Right ventricle myocardium inferior (tissue), 1 donor: ENCODE measurements at regions of chrX and their contacts with region 1.

Region 1: GRCh38 chrX:73855546-73855945 is 292.5 kb downstream of the CHIC1 start:
- DNase-seq: no peak
- ATAC-seq: no peak

Region 2: GRCh38 chrX:73766431-73766795 is 89.1 kb before region 1 on chrX:
- intact Hi-C with region 1: no loop called
- DNase-seq: no peak
- ATAC-seq: no peak

Region 3: DNA sequence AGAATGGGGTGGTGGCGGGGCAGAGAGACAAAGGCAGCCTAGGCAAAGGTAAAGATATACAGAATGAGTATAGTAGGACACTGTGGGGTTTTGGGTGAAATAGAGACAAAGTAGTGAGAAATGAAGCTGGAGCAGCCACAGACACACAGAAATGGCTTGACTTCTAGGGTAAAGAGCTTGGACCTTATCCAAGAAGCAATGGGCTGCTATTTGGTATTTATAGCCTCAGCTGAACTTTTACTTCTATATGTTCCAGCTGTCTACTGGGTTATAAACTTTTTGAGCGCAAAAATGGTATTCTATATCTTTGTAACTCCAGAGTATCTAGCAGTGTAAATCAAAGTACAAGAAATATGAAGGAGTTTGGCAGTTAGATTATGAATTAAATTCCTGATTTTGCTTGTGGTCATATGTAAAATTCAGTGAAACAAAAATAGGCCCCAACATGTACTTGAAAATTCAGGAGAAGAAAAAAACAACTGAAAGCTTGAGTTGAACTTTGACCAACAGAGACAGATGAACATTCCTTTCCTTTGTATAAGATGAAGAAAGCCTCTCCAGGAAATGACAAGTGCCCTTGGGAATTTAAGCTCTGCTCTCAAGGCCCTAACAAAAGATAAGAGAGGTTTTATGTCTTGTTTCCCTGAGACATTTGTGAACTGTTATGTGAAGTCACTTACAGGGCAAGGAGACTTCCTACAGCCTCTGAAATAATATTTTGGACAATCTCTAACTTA is 61.6 kb after region 1 on chrX:
- intact Hi-C with region 1: no loop called
- DNase-seq: no peak
- ATAC-seq: no peak

Region 4: GRCh38 chrX:74015379-74016019 is 160.0 kb after region 1 on chrX:
- intact Hi-C with region 1: loop called (anchors 2 kb)
- DNase-seq: no peak
- ATAC-seq: peak; percentile 37

Region 5: GRCh38 chrX:74133156-74133796 is 277.7 kb after region 1 on chrX:
- intact Hi-C with region 1: loop called (anchors 5 kb)
- DNase-seq: no peak
- ATAC-seq: peak; percentile 59

Region 6: DNA sequence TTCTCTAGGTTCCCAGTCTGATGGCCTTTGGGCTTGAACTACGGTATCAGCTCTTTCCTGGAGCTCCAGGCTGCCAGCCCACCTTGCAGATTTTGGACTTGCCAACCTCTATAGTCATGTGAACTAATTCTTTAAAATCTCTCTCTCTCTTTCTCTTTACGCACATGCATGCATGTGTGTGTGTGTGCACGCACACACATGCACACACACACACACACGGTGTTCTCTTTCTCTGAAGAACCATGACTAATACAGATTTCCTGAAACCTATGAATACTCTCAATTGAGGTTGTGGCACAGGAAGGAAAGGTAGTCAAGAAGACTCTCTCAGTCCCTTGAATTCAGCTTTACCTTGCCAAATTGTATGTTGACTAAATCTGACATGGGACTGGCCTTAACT is 442.2 kb after region 1 on chrX:
- intact Hi-C with region 1: loop called (anchors 5 kb)
- DNase-seq: no peak
- ATAC-seq: no peak

Region 7: GRCh38 chrX:74343343-74344279 is 488.1 kb after region 1 on chrX:
- intact Hi-C with region 1: loop called (anchors 1 kb)
- DNase-seq: no peak
- ATAC-seq: peak; percentile 73

Region 8: GRCh38 chrX:74536152-74536831 is 680.7 kb after region 1 on chrX:
- intact Hi-C with region 1: loop called (anchors 10 kb)
- DNase-seq: peak; percentile 91
- ATAC-seq: peak; percentile 90